GM10248 (cell line): ENCODE measurements at regions of chr12 and their contacts with region 1.

Region 1: DNA sequence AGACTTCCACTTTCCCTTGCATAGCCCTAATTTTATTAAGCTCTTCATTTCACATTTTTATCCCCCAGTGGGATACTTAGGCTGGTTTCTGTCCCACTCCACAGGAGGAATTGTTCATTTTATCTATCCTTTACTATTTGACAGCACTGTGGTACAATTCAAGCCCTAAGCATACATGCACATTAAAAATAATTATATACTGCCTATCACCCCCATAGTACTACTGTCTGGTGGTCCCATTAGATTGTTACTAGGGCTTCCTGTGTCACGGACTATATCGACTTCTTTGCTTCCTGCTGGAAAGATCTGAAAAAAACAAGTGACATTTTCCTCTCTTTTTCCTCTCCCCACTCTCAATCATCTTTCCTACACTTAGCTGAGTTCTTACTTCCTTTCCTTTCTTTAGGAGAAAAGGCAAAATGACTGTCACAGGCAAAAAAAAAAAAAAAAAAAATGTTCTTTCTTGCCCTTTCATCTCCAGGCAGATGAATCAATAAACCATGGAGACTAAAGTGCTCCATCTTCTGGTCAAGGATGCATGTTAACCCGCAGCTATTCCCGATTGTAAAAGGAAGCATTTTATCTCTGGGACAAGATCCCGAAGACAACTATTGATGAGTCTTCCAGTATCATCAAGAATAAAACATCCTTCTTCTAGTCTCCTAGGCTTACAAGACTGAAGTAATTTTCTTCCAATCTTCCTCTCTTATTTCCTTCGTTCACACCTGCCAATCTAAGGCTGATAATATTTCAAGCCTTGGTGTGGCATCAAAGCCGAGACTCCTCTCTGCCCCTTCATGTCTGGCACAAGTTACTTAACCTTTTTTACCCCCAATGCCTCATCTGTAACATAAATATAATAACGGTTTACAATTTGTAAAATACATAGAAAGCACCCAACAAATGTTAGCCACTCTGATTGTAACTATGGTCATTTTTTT is 94.4 kb upstream of the PLEKHG7 start:
- DNase-seq: no peak
- CTCF ChIP-seq: peak; percentile 50

Region 2: GRCh38 chr12:92597997-92598396 is 10.4 kb before region 1 on chr12:
- CTCF ChIA-PET with region 1: interaction called, 12 read pairs
- POLR2A ChIA-PET with region 1: no interaction called
- DNase-seq: no peak
- CTCF ChIP-seq: no peak